Naive thymus-derived CD4-positive, alpha-beta T cell (primary cell): ENCODE measurements at regions of chr14 and their contacts with region 1.

Region 1: DNA sequence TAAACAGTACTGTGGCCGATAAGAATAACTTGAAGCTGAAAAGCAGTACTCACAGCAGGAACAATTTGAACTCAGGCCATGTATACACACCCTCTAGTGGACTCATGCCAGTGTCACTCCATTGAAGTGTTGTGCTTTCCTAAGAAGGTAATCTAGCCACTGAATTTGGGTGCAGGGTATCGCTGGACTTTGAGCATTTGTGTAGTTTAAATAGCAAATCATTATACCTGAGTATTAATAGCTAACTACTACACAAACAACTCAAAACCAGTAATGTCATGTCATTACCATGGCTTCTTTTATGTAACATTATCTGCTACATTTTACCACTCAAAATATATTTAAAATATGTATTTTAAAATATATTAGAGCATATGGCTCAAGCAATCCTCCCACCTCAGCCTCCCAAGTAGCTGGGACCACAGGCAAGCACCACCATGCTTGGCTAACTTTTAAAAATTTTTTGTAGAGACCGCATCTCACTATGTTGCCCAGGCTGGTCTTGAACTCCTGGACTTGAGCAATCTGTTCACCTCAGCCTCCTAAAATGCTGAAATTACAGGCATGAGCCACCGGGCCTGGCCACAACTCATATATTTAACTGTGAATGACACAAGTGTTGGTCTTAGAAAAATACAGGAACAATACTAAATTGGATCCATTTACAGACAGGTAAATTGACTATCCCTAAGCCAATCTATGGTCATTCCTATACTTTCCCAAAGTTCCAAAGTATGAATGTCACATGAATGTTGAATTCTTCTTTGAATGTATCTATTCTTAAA is 25.6 kb upstream of the ARID4A start:
- DNase-seq: no peak
- ATAC-seq: peak; percentile 31
- H3K4me3 ChIP-seq: no peak overlapping the region
- H3K4me3 Mint-ChIP-seq: no peak overlapping the region
- H3K27ac ChIP-seq: peak overlapping the region; percentile 4
- H3K27ac Mint-ChIP-seq: peak overlapping the region in 6 of 9 donors; percentile 8 to 75 (median 30)
- H3K4me1 ChIP-seq: peaks cover 25 to 27% of the 10 kb centered on the region in 2 donors
- H3K4me1 Mint-ChIP-seq: peaks cover 20 to 56% (median 34%) of the 10 kb centered on the region in 7 donors
- H3K27me3 ChIP-seq: no peaks in the 10 kb centered on the region
- H3K27me3 Mint-ChIP-seq: no peaks in the 10 kb centered on the region

Region 2: GRCh38 chr14:58258156-58258555 is 14.6 kb before region 1 on chr14:
- CTCF ChIA-PET with region 1: no interaction called
- POLR2A ChIA-PET with region 1: interaction called, 8 read pairs
- intact Hi-C with region 1: loop called in 1 of 2 experiments (anchors 2 kb)
- DNase-seq: no peak
- ATAC-seq: no peak
- H3K4me3 ChIP-seq: no peak overlapping the region
- H3K4me3 Mint-ChIP-seq: no peak overlapping the region
- H3K27ac ChIP-seq: no peak overlapping the region
- H3K27ac Mint-ChIP-seq: peak overlapping the region in 1 of 9 donors; percentile 71
- H3K4me1 ChIP-seq: peaks cover 0 to 2% of the 10 kb centered on the region in 2 donors
- H3K4me1 Mint-ChIP-seq: peaks cover 8 to 23% (median 16%) of the 10 kb centered on the region in 7 donors
- H3K27me3 ChIP-seq: no peaks in the 10 kb centered on the region
- H3K27me3 Mint-ChIP-seq: no peaks in the 10 kb centered on the region

Region 3: GRCh38 chr14:58287607-58288042 is 14.8 kb after region 1 on chr14:
- CTCF ChIA-PET with region 1: no interaction called
- POLR2A ChIA-PET with region 1: interaction called, 5 read pairs
- intact Hi-C with region 1: loop called in 1 of 2 experiments (anchors 2 kb)
- DNase-seq: no peak
- ATAC-seq: no peak
- H3K4me3 ChIP-seq: no peak overlapping the region
- H3K4me3 Mint-ChIP-seq: peak overlapping the region in 2 of 10 donors; percentile 7 to 28
- H3K27ac ChIP-seq: no peak overlapping the region
- H3K27ac Mint-ChIP-seq: peak overlapping the region in 7 of 9 donors; percentile 15 to 87 (median 45)
- H3K4me1 ChIP-seq: peaks cover 10 to 29% of the 10 kb centered on the region in 2 donors
- H3K4me1 Mint-ChIP-seq: peaks cover 38 to 86% (median 76%) of the 10 kb centered on the region in 7 donors
- H3K27me3 ChIP-seq: no peaks in the 10 kb centered on the region
- H3K27me3 Mint-ChIP-seq: no peaks in the 10 kb centered on the region